CD4-positive, alpha-beta memory T cell (primary cell): ENCODE measurements at regions of chr1 and their contacts with region 1.

Region 1: GRCh38 chr1:183281553-183282091 is 95.6 kb downstream of the LAMC2 start:
- DNase-seq: peak; percentile 41 to 64 (median 48)
- H3K4me3 ChIP-seq: no peak overlapping the region
- H3K4me3 Mint-ChIP-seq: no peak overlapping the region
- H3K27ac ChIP-seq: no peak overlapping the region
- H3K27ac Mint-ChIP-seq: no peak overlapping the region
- H3K4me1 ChIP-seq: no peaks in the 10 kb centered on the region
- H3K4me1 Mint-ChIP-seq: no peaks in the 10 kb centered on the region
- H3K27me3 ChIP-seq: peaks cover 4% of the 10 kb centered on the region
- H3K27me3 Mint-ChIP-seq: peaks cover 2 to 12% of the 10 kb centered on the region in 2 donors

Region 2: DNA sequence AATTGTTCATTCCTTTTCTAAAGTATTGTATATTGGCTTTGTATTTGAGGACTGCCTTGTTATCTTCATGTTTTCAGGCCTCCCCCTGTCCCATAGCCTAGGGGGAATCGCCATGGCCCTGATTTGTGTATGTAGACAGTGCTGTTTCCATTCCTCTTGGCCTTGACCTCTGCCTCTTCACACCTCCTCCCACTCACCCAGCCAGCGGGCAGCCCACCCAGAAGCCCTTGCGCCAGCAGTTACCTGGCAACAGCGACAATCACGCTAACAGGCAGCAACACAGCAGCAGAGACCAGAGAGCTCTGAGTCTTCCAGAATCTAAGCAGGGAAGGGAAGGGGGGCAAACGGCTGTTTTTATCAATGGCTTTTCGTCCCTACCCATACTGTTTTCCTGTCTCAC is 542.1 kb before region 1 on chr1:
- CTCF ChIA-PET with region 1: no interaction called
- POLR2A ChIA-PET with region 1: no interaction called
- intact Hi-C with region 1: no loop called
- DNase-seq: no peak
- H3K4me3 ChIP-seq: no peak overlapping the region
- H3K4me3 Mint-ChIP-seq: no peak overlapping the region
- H3K27ac ChIP-seq: no peak overlapping the region
- H3K27ac Mint-ChIP-seq: no peak overlapping the region
- H3K4me1 ChIP-seq: no peaks in the 10 kb centered on the region
- H3K4me1 Mint-ChIP-seq: no peaks in the 10 kb centered on the region
- H3K27me3 ChIP-seq: no peaks in the 10 kb centered on the region
- H3K27me3 Mint-ChIP-seq: peaks cover 0 to 1% of the 10 kb centered on the region in 2 donors

Region 3: GRCh38 chr1:183030053-183030452 is 251.6 kb before region 1 on chr1:
- CTCF ChIA-PET with region 1: no interaction called
- POLR2A ChIA-PET with region 1: no interaction called
- intact Hi-C with region 1: no loop called
- DNase-seq: no peak
- H3K4me3 ChIP-seq: no peak overlapping the region
- H3K4me3 Mint-ChIP-seq: no peak overlapping the region
- H3K27ac ChIP-seq: no peak overlapping the region
- H3K27ac Mint-ChIP-seq: no peak overlapping the region
- H3K4me1 ChIP-seq: peaks cover 11% of the 10 kb centered on the region
- H3K4me1 Mint-ChIP-seq: peaks cover 8 to 12% (median 10%) of the 10 kb centered on the region in 4 donors
- H3K27me3 ChIP-seq: peaks cover 21% of the 10 kb centered on the region
- H3K27me3 Mint-ChIP-seq: peaks cover 43 to 44% of the 10 kb centered on the region in 2 donors

Region 4: DNA sequence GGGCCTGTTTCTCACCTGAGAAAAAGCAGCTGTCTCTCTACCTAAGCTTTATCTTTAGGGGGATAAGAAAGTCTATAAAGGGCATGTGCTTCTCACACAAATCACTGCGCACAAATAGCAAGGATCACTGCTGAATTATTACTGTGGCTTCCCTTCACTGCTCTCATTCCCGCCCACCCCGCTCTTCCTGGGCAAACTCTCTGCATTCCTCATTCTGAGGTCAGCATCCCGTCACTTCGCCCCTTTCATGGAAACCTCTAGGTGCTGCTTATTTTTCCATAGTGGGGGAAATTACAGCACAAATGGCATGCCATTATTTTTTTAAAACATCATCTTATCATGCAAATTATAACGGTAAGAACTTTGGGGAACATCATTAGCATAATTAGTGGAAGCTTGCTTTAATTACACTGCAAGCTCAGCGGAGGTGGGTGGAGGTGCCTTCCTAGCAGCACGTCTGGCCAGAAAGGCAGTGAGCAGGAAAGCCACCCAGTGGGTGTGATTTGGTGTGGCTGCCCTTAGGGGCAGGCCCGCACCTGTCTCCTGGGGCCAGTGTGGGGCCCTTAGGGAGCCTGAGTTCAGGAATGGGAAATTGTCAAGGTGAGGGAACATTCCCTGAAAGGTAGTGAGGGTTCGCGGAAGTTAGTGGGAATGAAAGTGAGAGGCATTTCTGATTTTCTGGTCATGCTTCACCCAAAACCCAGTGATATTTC is 10.3 kb after region 1 on chr1:
- CTCF ChIA-PET with region 1: interaction called, 12 read pairs
- POLR2A ChIA-PET with region 1: no interaction called
- intact Hi-C with region 1: no loop called
- DNase-seq: no peak
- H3K4me3 ChIP-seq: no peak overlapping the region
- H3K4me3 Mint-ChIP-seq: no peak overlapping the region
- H3K27ac ChIP-seq: no peak overlapping the region
- H3K27ac Mint-ChIP-seq: no peak overlapping the region
- H3K4me1 ChIP-seq: no peaks in the 10 kb centered on the region
- H3K4me1 Mint-ChIP-seq: no peaks in the 10 kb centered on the region
- H3K27me3 ChIP-seq: no peaks in the 10 kb centered on the region
- H3K27me3 Mint-ChIP-seq: peaks cover 4 to 7% of the 10 kb centered on the region in 2 donors

Region 5: DNA sequence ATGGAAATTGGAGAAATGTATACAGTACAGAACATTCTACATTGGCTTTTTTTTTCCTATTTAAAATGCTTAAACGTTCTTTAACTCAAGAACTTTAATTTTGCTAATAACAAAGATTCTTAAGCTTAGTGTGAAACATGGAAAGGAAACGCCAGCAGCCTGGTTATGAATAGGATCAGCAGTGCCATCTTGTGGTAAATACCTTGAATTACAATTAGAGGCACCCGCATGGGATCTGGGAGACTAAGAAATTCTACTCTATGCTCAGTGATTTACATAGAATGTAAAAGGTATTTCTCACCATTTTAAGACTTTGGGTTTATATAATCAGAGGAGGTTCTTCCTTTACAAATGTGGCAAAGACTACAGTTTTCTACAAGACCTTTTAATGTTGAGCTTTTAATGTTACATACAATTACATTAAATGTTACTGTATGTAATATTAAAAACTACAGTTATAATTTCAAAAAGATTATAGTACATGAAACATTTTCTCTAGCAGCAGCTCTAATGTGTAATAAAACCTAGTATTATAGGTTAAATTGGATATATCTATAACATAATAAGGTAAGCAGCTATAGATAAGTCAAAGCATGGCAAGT is 403.6 kb after region 1 on chr1:
- CTCF ChIA-PET with region 1: interaction called, 12 read pairs
- POLR2A ChIA-PET with region 1: no interaction called
- intact Hi-C with region 1: no loop called
- DNase-seq: peak in 4 of 5 donors; percentile 51 to 57 (median 56)
- H3K4me3 ChIP-seq: no peak overlapping the region
- H3K4me3 Mint-ChIP-seq: no peak overlapping the region
- H3K27ac ChIP-seq: no peak overlapping the region
- H3K27ac Mint-ChIP-seq: no peak overlapping the region
- H3K4me1 ChIP-seq: no peaks in the 10 kb centered on the region
- H3K4me1 Mint-ChIP-seq: no peaks in the 10 kb centered on the region
- H3K27me3 ChIP-seq: no peaks in the 10 kb centered on the region
- H3K27me3 Mint-ChIP-seq: peaks cover 4 to 12% of the 10 kb centered on the region in 2 donors

Region 6: GRCh38 chr1:183702087-183702812 is 420.6 kb after region 1 on chr1:
- CTCF ChIA-PET with region 1: no interaction called
- POLR2A ChIA-PET with region 1: no interaction called
- intact Hi-C with region 1: no loop called
- DNase-seq: no peak
- H3K4me3 ChIP-seq: no peak overlapping the region
- H3K4me3 Mint-ChIP-seq: no peak overlapping the region
- H3K27ac ChIP-seq: no peak overlapping the region
- H3K27ac Mint-ChIP-seq: no peak overlapping the region
- H3K4me1 ChIP-seq: no peaks in the 10 kb centered on the region
- H3K4me1 Mint-ChIP-seq: peaks cover 4 to 11% (median 7%) of the 10 kb centered on the region in 4 donors
- H3K27me3 ChIP-seq: no peaks in the 10 kb centered on the region
- H3K27me3 Mint-ChIP-seq: no peaks in the 10 kb centered on the region